Activated CD4-positive, alpha-beta T cell treated with anti-CD3 and anti-CD28 coated beads for 36 hours (primary cell): ENCODE measurements at regions of chr16 and their contacts with region 1.

Region 1: GRCh38 chr16:85888405-85889331 is 10.3 kb upstream of the IRF8 start:
- DNase-seq: peak; percentile 61
- ATAC-seq: peak; percentile 92
- H3K4me3 Mint-ChIP-seq: peak overlapping the region; percentile 7
- H3K27ac Mint-ChIP-seq: peak overlapping the region; percentile 77
- H3K4me1 Mint-ChIP-seq: peaks cover 39% of the 10 kb centered on the region
- H3K27me3 Mint-ChIP-seq: peaks cover 31% of the 10 kb centered on the region

Region 2: DNA sequence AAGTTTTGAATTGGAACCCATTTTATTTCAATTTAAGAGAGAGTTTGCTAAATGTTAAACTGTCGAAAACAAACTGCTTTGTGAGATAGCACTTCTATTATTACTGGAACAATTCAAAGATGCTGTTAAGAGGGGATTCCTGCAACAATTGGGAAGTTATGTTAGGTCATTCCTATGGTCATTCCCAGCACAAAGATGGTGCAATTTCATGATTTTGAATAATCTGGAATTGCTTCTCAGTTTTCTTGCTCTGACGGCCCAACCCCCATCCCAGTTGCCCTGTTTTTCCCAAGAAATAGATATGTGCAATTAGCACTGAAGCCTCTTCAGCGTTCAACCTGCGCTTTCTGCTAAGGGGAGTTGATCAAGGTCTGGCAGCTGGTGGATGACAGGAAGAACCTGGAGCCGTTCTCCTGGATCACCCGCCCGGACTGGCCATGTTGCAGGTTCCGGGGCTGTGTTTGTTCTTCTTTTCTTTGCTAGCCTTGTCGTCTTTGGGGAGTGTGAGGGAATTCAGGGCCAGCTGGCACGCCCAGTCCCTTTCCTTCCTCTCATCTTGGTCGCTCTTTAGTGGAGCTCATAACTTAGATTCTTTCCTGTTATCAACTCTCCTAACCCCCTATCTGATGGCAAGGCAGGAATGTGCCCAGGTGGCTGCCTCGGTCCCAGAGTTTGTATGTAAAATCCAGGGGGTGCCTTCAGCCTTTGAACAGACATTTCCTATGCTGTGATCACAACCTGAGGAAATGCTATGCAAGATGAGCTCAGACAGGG is 18.7 kb before region 1 on chr16:
- CTCF ChIA-PET with region 1: no interaction called
- POLR2A ChIA-PET with region 1: no interaction called
- intact Hi-C with region 1: loop called (anchors 1 to 2 kb)
- DNase-seq: no peak
- ATAC-seq: peak; percentile 19
- H3K4me3 Mint-ChIP-seq: peak overlapping the region; percentile 0
- H3K27ac Mint-ChIP-seq: peak overlapping the region; percentile 6
- H3K4me1 Mint-ChIP-seq: peaks cover 32% of the 10 kb centered on the region
- H3K27me3 Mint-ChIP-seq: peaks cover 7% of the 10 kb centered on the region

Region 3: GRCh38 chr16:85947230-85948137 is 58.8 kb after region 1 on chr16:
- CTCF ChIA-PET with region 1: interaction called, 3 read pairs
- POLR2A ChIA-PET with region 1: no interaction called
- intact Hi-C with region 1: loop called in 1 of 2 experiments (anchors 2 kb)
- DNase-seq: peak; percentile 80
- ATAC-seq: peak; percentile 90
- H3K4me3 Mint-ChIP-seq: peak overlapping the region; percentile 29
- H3K27ac Mint-ChIP-seq: peak overlapping the region; percentile 58
- H3K4me1 Mint-ChIP-seq: peaks cover 72% of the 10 kb centered on the region
- H3K27me3 Mint-ChIP-seq: peaks cover 9% of the 10 kb centered on the region

Region 4: GRCh38 chr16:86664533-86665318 is 776.1 kb after region 1 on chr16:
- CTCF ChIA-PET with region 1: no interaction called
- POLR2A ChIA-PET with region 1: no interaction called
- intact Hi-C with region 1: loop called in 1 of 2 experiments (anchors 5 kb)
- DNase-seq: peak; percentile 85
- ATAC-seq: peak; percentile 95
- H3K4me3 Mint-ChIP-seq: peak overlapping the region; percentile 21
- H3K27ac Mint-ChIP-seq: peak overlapping the region; percentile 83
- H3K4me1 Mint-ChIP-seq: peaks cover 28% of the 10 kb centered on the region
- H3K27me3 Mint-ChIP-seq: peaks cover 31% of the 10 kb centered on the region